ENCODE measurements at regions of chr14 and their contacts with region 1.

Region 1: DNA sequence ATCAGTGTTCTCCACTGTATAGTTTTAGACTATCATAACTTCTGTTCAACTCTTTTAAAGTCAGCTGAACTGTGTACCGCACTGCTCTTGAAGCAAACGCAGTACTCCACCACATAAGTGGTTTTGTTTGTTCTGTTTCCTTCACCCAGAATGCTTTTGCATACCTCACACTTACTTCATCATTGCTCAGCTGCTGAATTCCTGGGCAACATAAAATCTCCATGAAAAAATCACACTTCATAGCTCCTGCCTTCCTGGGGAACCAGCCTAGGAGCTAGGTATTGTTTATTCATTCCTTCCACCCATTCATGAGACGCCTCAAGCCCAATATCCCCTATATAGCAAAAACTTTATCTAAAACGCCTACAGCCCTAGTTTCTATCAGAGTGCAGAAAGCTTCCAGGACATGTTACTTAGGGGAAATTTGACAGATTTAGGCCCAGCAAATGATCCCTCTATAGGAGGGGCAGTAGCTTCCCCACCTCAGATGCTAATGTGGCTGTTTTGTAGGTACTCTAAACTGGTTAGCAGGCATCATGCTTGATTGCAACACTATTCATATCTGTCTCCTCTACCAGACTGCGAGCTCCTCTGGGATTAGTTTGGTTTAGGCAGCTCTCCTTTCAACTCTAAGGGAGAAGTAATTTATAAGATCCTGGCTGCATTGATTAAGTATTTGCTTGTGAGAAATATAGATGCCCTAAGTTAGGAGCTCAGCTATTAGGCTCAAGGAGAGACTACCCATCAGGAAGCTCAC is 44.5 kb downstream of the LRRC9 start:
- DNase-seq: no peak
- H3K4me3 Mint-ChIP-seq: no peak overlapping the region
- H3K27ac Mint-ChIP-seq: no peak overlapping the region
- H3K4me1 Mint-ChIP-seq: peaks cover 10% of the 10 kb centered on the region
- H3K27me3 Mint-ChIP-seq: no peaks in the 10 kb centered on the region

Region 2: GRCh38 chr14:59944909-59945308 is 19.5 kb before region 1 on chr14:
- CTCF ChIA-PET with region 1: interaction called, 11 read pairs
- DNase-seq: no peak
- H3K4me3 Mint-ChIP-seq: no peak overlapping the region
- H3K27ac Mint-ChIP-seq: no peak overlapping the region
- H3K4me1 Mint-ChIP-seq: no peaks in the 10 kb centered on the region
- H3K27me3 Mint-ChIP-seq: no peaks in the 10 kb centered on the region

Region 3: DNA sequence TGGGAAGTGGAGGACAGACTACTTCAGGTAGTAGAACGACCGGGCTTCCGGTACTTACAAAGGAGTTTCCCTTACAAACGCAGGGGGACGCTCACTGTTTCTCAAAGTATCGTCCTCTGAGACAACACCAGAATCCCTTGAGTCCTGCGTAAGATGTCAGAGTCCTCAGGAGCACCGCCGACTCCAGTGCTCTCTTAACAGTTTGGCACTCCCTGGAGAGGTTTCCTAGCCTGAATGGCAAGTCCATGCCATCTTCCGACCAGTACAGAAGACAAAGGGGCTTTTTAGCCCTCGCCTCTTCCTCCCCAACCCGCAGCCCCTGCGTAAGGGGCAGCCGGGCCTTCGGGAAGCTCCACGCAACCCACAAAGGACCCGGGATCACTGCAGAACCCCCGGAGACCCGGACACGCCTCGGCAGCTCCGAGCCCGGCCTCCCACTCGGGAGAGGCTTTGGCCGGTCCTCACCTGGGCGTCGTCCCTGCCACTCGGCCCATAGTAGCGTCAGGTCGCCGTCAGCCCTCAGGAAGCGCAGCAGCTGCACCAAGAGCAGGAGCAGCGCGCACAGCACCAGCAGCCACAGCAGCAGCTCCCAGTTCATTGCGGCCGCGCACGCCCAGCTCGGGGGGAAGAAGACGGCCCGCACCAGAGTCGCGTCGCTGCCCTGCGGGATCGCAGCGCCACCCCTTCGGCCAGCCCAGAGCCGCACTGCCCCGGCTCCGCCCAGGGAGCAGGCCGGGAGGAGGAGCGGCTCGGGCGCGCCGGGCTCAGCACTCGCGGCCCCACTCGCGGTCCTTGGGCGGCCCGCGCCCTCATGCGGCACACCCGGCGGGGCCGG is 200.5 kb after region 1 on chr14 and contains the start of gene DHRS7:
- CTCF ChIA-PET with region 1: interaction called, 21 read pairs
- DNase-seq: peak; percentile 67
- H3K4me3 Mint-ChIP-seq: peak within 1 kb of the TSS; percentile 95
- H3K27ac Mint-ChIP-seq: peak within 1 kb of the TSS; percentile 95
- H3K4me1 Mint-ChIP-seq: peaks cover 29% of the 10 kb centered on the region
- H3K27me3 Mint-ChIP-seq: peaks cover 5% of the 10 kb centered on the region

Measured in activated naive CD4-positive, alpha-beta T cell treated with anti-CD3 and anti-CD28 coated beads, Interleukin-2, amount 10 ng/mL, durations not matched to agents 7 days and 5 days (primary cell).